ENCODE measurements at regions of chr2 and their contacts with region 1.

Region 1: GRCh38 chr2:168773719-168774521 is 28.5 kb upstream of the NOSTRIN start:
- DNase-seq: peak; percentile 31
- H3K4me3 ChIP-seq: no peak overlapping the region
- H3K27ac ChIP-seq: peak overlapping the region; percentile 17
- H3K4me1 ChIP-seq: peaks cover 30% of the 10 kb centered on the region
- H3K27me3 ChIP-seq: no peaks in the 10 kb centered on the region
- CTCF ChIP-seq: peak; percentile 89

Region 2: DNA sequence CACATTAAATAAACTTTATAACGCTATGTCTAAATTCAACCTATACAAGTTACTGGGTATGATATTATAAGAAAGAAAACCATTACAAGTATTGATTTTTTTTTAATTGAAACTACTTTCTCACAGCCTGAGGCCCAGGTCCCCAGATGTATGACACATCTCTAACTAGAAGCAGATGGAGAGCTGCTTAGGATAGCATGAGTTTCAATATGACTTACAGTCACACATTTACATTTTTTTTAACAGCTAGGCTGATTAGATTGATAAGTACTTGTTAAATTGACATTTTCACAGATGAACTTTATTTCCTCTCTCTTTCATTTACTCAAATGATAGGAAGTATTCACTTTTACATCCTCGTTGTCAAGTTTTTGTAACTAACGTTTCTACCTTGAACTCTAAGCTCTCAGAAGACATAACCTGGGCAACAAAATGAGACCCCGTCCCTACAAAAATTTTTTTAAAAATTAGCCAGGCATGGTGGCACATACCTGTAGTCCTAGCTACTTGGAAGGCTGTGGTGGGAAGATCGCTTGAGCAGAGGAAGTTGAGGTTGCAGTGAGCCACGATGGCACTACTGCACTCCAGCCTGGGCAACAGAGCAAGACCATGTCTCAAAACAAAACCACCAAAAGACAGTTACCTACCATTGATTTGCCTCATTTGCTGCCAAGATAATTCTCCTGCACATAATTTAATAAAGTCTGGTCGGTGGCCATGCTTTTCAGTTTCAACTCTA is 579.0 kb before region 1 on chr2:
- intact Hi-C with region 1: no loop called
- DNase-seq: no peak
- H3K4me3 ChIP-seq: no peak overlapping the region
- H3K27ac ChIP-seq: no peak overlapping the region
- H3K4me1 ChIP-seq: peaks cover 57% of the 10 kb centered on the region
- H3K27me3 ChIP-seq: no peaks in the 10 kb centered on the region
- CTCF ChIP-seq: no peak

Region 3: GRCh38 chr2:168614172-168615018 is 159.5 kb before region 1 on chr2:
- intact Hi-C with region 1: no loop called
- DNase-seq: no peak
- H3K4me3 ChIP-seq: no peak overlapping the region
- H3K27ac ChIP-seq: no peak overlapping the region
- H3K4me1 ChIP-seq: peaks cover 19% of the 10 kb centered on the region
- H3K27me3 ChIP-seq: no peaks in the 10 kb centered on the region
- CTCF ChIP-seq: no peak

Region 4: GRCh38 chr2:168912901-168913369 is 139.0 kb after region 1 on chr2:
- intact Hi-C with region 1: loop called (anchors 5 kb)
- DNase-seq: peak; percentile 22
- H3K4me3 ChIP-seq: peak overlapping the region; percentile 43
- H3K27ac ChIP-seq: no peak overlapping the region
- H3K4me1 ChIP-seq: peaks cover 7% of the 10 kb centered on the region
- H3K27me3 ChIP-seq: peaks cover 33% of the 10 kb centered on the region
- CTCF ChIP-seq: no peak